ENCODE measurements at regions of chr7 and their contacts with region 1.

Region 1: DNA sequence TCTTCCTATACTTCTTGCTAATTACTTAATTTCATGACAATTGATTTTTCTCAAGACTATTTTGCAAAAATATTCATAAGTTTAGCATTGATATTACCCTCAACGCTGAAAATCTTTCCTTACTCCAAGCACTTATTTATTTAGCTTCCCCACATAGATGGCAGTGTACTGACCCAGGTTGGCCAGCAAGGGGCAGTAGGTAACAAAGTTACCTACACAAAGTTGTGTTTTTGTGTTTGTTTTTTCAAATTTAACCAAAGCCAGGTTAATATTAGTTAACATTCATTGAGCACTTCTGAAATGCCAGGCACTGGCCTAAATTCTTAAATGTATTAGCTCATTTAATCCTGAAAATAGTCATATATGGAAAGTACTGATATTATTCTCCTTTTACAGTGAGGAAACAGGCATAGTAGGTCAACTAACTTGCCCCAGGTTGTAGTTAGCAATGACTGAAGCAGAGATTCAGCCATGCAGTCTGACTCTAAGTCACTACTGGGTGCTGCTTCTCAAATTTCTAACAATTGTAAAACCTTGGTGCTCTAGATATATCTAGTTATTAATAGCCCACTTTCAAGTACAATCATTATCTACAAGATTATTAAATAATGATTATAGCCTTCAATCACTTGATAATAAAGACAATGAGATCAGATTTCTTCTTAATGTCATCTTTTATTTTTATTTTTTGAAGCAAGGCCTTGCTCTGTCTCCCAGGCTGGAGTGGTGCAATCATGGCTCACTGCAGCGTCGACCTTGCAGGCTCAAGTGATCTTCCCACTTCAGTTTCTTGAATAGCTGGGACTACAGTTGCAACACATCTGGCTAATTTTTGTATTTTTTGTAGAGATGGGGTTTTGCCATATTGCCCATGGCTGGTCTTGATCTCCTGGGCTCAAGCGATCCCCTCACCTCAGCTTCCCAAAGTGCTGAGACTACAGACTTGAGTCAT is 5.8 kb upstream of the GGCT start:
- DNase-seq: no peak
- ATAC-seq: peak in 2 of 4 donors; percentile 52 to 65
- H3K4me3 ChIP-seq: no peak overlapping the region
- H3K27ac ChIP-seq: no peak overlapping the region
- H3K4me1 ChIP-seq: peaks cover 0 to 12% (median under 1%) of the 10 kb centered on the region in 12 donors
- H3K27me3 ChIP-seq: no peaks in the 10 kb centered on the region
- CTCF ChIP-seq: peak; percentile 53 to 86 (median 74)
- POLR2A ChIP-seq: no peak

Region 2: DNA sequence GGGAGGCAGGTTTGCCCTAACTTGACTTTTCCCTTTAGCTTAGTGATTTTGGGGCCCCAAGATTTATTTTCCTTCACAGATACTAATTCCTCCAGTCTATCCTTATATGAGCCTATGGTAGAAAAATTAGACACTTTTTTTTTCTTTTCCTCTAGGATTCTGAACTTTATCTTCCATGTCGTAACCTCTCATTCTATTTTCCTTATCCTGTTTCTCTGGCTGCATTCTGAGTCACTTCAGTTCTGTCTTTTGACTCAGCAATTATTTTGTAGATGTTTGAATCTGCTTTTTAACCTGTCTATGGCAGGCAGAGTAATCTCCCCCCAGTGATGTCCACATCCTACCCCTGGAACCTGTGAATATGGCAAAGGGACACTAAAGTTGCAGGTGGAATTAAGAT is 24.7 kb before region 1 on chr7:
- intact Hi-C with region 1: no loop called
- DNase-seq: no peak
- ATAC-seq: no peak
- H3K4me3 ChIP-seq: no peak overlapping the region
- H3K27ac ChIP-seq: no peak overlapping the region
- H3K4me1 ChIP-seq: peaks cover 0 to 6% (median 0%) of the 10 kb centered on the region in 12 donors
- H3K27me3 ChIP-seq: no peaks in the 10 kb centered on the region
- CTCF ChIP-seq: no peak
- POLR2A ChIP-seq: no peak

Region 3: DNA sequence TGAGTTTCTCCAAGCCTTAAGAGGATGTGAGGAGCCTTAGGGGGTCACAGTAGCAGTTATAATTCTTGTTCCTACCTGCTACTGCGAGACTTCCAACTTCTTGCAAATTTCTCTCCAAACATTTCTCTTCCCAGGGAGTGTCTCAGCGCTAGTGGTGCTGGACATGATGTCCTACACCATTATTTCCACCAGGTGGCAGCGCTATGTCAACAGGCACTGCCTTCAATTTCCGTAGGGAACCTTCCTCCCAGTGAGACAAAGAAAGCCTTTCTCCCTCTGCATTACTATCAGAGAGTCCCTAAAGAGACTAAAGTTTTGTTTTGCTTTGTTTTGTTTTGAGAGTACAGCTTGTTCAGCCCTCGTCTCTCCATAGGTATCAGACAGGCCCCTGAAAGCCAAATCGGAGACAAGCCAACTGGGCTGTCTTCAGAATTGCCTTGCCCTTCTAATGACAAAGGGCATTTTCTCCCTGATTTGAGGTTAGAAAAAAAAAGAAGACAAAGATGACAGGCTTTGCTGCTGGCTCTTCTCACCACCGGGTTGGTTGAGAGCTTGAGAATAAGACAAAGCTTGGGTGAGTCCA is 38.5 kb after region 1 on chr7:
- intact Hi-C with region 1: loop called in 1 of 10 experiments (anchors 5 kb)
- DNase-seq: peak in 4 of 5 donors; percentile 48 to 70 (median 60)
- ATAC-seq: peak; percentile 66 to 84 (median 76)
- H3K4me3 ChIP-seq: no peak overlapping the region
- H3K27ac ChIP-seq: peak overlapping the region in 11 of 12 donors; percentile 20 to 77 (median 56)
- H3K4me1 ChIP-seq: peaks cover 3 to 31% (median 14%) of the 10 kb centered on the region in 12 donors
- H3K27me3 ChIP-seq: no peaks in the 10 kb centered on the region
- CTCF ChIP-seq: peak; percentile 72 to 95 (median 83)
- POLR2A ChIP-seq: no peak